ENCODE measurements at regions of chr2 and their contacts with region 1.

Region 1: GRCh38 chr2:58237741-58238140 is 3.4 kb downstream of the FANCL start:
- DNase-seq: no peak
- ATAC-seq: no peak

Region 2: GRCh38 chr2:58046585-58047372 is 191.0 kb before region 1 on chr2 and contains the start of gene VRK2:
- intact Hi-C with region 1: loop called (anchors 10 kb)
- DNase-seq: peak; percentile 95
- ATAC-seq: peak; percentile 99
- total RNA-seq, gene VRK2: 29.4 TPM